Heart right ventricle (tissue), 16 donors: ENCODE measurements at regions of chr11 and their contacts with region 1.

Region 1: GRCh38 chr11:57144075-57144474 is 37.7 kb upstream of the LRRC55 start:
- DNase-seq: no peak
- ATAC-seq: no peak
- H3K4me3 ChIP-seq: no peak overlapping the region
- H3K27ac ChIP-seq: no peak overlapping the region
- H3K4me1 ChIP-seq: peaks cover 0 to 8% (median 0%) of the 10 kb centered on the region in 9 donors
- H3K27me3 ChIP-seq: peaks cover 0 to 4% (median 0%) of the 10 kb centered on the region in 7 donors
- CTCF ChIP-seq: no peak

Region 2: DNA sequence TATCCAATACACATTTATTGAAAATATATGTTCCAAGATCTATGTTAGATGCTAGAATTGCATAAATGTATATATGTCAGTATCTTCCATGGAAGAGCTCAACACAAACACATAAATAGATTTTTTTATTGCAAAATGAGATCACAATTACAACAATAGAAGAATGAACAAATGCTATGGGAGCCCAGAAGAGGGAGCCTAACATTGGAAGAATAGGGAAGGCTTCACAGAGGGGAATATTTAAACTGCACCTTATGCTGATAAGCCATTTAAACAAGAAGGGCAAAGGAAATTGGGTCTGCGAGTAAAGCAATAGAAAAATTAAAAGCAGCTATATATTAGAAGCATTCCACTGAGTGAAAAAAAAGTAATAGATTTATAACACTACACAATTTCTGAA is 58.5 kb before region 1 on chr11:
- intact Hi-C with region 1: no loop called
- DNase-seq: no peak
- ATAC-seq: no peak
- H3K4me3 ChIP-seq: no peak overlapping the region
- H3K27ac ChIP-seq: no peak overlapping the region
- H3K4me1 ChIP-seq: peaks cover 0 to 4% (median 0%) of the 10 kb centered on the region in 9 donors
- H3K27me3 ChIP-seq: no peaks in the 10 kb centered on the region
- CTCF ChIP-seq: peak in 5 of 9 donors; percentile 15 to 42 (median 20)

Region 3: DNA sequence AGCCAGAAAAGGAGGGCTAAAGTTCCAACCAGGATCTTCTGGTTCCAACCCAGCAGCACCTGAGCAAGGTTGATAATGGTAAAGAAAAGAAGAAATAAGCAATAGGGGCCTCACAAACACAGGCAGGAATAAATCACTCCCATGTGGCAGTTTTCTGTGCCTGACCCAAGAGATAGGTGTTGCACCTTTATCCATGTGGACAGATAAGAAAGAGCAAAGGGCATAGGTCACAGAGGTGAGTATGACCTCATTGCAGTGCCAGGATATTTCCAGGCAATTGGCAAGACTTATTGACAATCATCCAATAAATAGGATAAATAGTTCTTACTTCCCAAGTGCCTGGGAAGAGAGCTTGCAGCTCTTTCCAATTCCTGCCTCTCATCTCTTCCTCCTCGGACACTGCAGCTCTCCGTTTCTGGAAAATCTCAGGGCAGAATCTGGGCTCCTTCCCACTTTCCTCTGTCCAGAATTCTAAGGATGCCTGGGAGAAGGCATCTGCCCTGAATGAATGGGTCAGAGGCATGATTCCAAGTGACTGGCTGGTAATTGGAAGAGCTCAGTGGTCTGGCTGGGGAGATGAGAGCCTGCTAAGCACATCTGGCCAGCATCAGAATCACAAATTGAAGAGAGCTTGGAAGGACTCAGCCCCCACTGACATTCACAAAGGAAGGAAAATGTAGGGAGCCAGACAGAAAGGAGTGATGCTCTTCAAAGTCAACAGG is 23.2 kb after region 1 on chr11:
- intact Hi-C with region 1: loop called in 1 of 10 experiments (anchors 2 kb)
- DNase-seq: no peak
- ATAC-seq: no peak
- H3K4me3 ChIP-seq: no peak overlapping the region
- H3K27ac ChIP-seq: no peak overlapping the region
- H3K4me1 ChIP-seq: peaks cover 0 to 6% (median 0%) of the 10 kb centered on the region in 9 donors
- H3K27me3 ChIP-seq: no peaks in the 10 kb centered on the region
- CTCF ChIP-seq: no peak

Region 4: GRCh38 chr11:57196596-57196995 is 52.5 kb after region 1 on chr11:
- intact Hi-C with region 1: loop called in 2 of 10 experiments (anchors 10 kb)
- DNase-seq: no peak
- ATAC-seq: peak in 2 of 8 donors; percentile 33 to 48
- H3K4me3 ChIP-seq: no peak overlapping the region
- H3K27ac ChIP-seq: peak overlapping the region in 6 of 10 donors; percentile 12 to 75 (median 56)
- H3K4me1 ChIP-seq: peaks cover 13 to 79% (median 58%) of the 10 kb centered on the region in 9 donors
- H3K27me3 ChIP-seq: no peaks in the 10 kb centered on the region
- CTCF ChIP-seq: no peak